Sigmoid colon (tissue), 7 donors: ENCODE measurements at regions of chr3 and their contacts with region 1.

Region 1: DNA sequence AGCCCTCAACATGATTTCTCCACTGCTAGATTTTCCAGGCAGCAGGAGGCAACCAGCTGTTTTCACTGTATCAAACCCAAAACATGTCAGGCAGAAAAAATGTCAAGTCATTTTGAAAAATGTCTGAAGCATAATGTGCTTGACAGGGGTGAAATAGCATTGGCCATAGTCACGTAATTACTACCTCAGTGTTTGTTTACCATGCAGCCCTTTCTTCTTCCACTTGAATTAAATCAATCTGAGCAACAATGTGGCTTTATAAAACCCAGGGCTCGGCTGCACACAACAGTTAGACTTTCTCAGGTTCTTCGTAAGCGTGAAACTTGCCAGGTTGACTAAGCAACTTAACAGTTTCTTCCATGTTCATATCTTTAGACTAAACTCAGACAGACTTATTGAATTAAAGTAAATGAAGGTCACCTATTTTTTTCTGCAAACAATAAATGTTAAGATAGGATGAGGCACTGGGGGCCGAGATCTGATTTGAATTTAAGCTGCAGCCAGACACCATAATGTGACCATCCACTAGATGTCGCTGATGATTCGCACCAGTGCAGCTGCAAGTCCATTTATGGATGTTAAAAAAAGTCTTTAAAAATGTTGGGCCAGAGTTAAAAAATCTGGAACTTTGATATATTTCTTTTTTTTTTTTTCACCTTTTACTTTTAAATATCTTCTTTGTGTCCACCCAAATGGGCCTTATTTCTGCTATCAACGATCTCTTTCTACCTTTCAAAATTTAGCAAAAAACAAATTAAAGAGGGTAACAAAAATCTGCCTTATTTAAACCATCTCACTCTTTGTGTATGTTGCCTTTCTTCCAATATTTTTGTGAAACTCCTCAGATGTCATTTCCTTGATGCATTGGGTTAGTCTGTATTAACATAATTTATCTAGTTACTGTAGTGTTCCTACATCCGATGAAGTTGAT is 305.9 kb downstream of the CACNA2D3 start:
- DNase-seq: peak; percentile 72
- H3K4me3 ChIP-seq: no peak overlapping the region
- H3K27ac ChIP-seq: peak overlapping the region in 2 of 4 donors; percentile 33 to 41
- H3K4me1 ChIP-seq: peaks cover 0 to 28% (median 17%) of the 10 kb centered on the region in 4 donors
- H3K27me3 ChIP-seq: no peaks in the 10 kb centered on the region
- CTCF ChIP-seq: peak; percentile 54 to 84 (median 70)
- EP300 ChIP-seq: no peak
- POLR2A ChIP-seq: no peak

Region 2: DNA sequence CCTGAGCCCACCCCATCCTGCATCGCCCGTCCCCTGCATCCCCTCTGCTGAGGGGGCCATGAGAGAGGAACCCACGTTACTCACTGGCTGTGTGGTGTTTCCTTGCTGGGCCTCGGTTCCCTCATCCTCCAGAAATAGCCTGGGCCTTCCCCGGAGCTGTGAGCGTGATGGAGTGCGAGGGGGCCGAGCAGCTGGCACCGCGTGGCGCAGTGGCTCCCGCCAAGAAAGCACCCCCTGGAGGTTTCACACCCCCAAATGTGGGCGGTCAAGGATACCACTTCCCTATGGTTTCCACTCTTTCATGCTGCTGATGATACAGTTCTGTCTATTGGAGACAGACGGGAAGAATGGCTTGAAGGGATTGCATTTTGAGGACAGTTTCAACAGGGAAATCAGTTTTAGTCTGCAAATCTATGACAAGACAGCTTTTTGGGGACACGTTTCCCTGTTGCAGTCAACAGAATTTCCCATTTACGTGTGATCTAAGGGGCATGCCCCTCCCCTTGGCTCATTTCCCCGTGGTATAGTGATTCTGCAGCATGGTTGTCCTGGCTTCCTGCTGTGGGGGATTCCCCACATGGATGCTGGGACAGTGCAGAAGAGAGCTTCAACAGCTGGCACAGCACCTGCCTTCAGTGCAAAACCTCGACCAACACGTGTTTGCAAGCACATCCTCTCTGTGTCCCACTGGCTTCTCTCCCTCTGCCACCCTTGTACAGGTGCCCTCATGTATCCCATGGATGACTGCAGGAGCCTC is 122.2 kb after region 1 on chr3:
- intact Hi-C with region 1: no loop called
- DNase-seq: no peak
- H3K4me3 ChIP-seq: no peak overlapping the region
- H3K27ac ChIP-seq: no peak overlapping the region
- H3K4me1 ChIP-seq: peaks cover 0 to 9% (median 7%) of the 10 kb centered on the region in 4 donors
- H3K27me3 ChIP-seq: no peaks in the 10 kb centered on the region
- CTCF ChIP-seq: no peak
- EP300 ChIP-seq: no peak
- POLR2A ChIP-seq: no peak

Region 3: DNA sequence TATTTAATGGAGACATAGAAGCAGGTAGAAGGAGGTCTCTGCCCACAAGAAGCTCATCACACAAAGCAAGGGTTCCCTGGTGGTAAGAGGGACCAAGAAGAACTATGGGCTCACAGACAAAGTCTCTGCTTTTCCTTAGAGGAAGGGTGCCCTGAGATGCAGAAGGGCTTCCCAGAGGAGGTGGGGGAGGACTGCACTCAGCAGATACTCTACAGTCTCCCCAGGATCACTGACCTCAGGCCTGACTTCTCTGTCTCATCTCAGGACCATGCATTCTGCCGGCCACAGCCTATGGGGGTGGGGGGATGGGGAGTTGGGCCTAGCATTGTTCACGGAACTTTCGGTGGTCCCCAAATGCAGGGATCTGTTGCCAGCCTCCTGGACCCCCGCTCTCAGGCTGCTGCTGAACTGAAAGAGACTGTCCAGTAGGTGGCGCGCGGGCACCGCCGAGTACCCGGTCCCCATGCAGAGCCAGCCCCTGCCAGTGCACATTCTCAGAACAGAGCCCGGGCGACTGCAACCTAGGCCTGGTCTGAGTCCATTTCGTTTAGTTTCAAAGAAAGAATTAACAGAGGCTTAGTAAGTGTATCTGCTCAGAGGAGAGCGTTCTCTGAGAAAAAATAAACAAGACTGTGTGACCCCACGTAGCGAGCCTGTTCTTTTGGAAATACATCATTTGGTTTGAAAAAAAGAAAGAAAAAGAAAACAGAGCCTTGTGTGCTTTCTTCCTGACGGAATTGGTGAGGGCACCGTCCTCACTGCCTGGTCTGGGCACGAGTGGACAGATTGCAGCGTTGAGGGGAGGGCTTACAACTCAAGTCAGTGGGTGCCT is 425.6 kb after region 1 on chr3:
- intact Hi-C with region 1: loop called (anchors 10 kb)
- DNase-seq: peak; percentile 86
- H3K4me3 ChIP-seq: no peak overlapping the region
- H3K27ac ChIP-seq: no peak overlapping the region
- H3K4me1 ChIP-seq: peaks cover 0 to 9% (median 6%) of the 10 kb centered on the region in 4 donors
- H3K27me3 ChIP-seq: no peaks in the 10 kb centered on the region
- CTCF ChIP-seq: peak; percentile 14 to 92 (median 88)
- EP300 ChIP-seq: no peak
- POLR2A ChIP-seq: no peak

Region 4: GRCh38 chr3:55180936-55181535 is 752.8 kb after region 1 on chr3:
- intact Hi-C with region 1: loop called (anchors 5 kb)
- DNase-seq: no peak
- H3K4me3 ChIP-seq: no peak overlapping the region
- H3K27ac ChIP-seq: no peak overlapping the region
- H3K4me1 ChIP-seq: peaks cover 0 to 4% (median 0%) of the 10 kb centered on the region in 4 donors
- H3K27me3 ChIP-seq: no peaks in the 10 kb centered on the region
- CTCF ChIP-seq: peak in 3 of 4 experiments; percentile 45 to 71 (median 56)
- EP300 ChIP-seq: no peak
- POLR2A ChIP-seq: no peak

Region 5: GRCh38 chr3:56251343-56251945 is 1823.2 kb after region 1 on chr3:
- intact Hi-C with region 1: loop called (anchors 5 kb)
- DNase-seq: no peak
- H3K4me3 ChIP-seq: no peak overlapping the region
- H3K27ac ChIP-seq: no peak overlapping the region
- H3K4me1 ChIP-seq: no peaks in the 10 kb centered on the region
- H3K27me3 ChIP-seq: no peaks in the 10 kb centered on the region
- CTCF ChIP-seq: peak; percentile 38 to 78 (median 62)
- EP300 ChIP-seq: no peak
- POLR2A ChIP-seq: no peak